Left lung (tissue), 14 donors: ENCODE measurements at regions of chr10 and their contacts with region 1.

Region 1: DNA sequence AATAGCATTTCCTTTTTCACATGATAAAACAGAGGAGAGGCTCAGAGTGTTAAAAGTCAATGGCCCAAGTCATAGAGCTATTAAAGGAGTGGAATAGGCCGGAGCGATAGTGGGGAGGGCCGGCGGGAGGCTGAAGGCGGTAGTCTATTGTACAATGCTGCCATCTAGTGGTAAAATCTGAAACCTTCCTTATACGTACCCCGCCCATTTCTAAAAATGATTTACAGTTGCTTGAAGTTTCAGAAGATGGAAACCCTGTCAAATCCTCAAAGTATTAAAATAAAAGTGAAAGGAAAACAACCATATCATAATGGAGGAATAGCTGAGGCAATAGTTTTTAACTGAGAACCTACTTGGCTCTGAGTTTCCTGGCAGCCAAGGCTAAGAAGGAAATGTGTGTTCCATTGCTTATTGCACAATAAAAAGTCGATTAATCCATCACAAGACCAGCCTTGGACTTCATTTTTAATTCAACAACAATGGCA is 209.1 kb downstream of the CCSER2 start:
- DNase-seq: peak in 2 of 4 donors; percentile 43 to 72
- ATAC-seq: peak; percentile 91
- H3K4me3 ChIP-seq: no peak overlapping the region
- H3K27ac ChIP-seq: no peak overlapping the region
- H3K4me1 ChIP-seq: peaks cover 0 to 15% of the 10 kb centered on the region in 2 donors
- H3K27me3 ChIP-seq: peaks cover 0 to 29% of the 10 kb centered on the region in 2 donors
- CTCF ChIP-seq: peak; percentile 86 to 87

Region 2: GRCh38 chr10:84264611-84265141 is 272.8 kb before region 1 on chr10:
- intact Hi-C with region 1: loop called in 1 of 2 experiments (anchors 5 kb)
- DNase-seq: peak; percentile 54 to 81 (median 62)
- ATAC-seq: peak; percentile 98
- H3K4me3 ChIP-seq: no peak overlapping the region
- H3K27ac ChIP-seq: no peak overlapping the region
- H3K4me1 ChIP-seq: no peaks in the 10 kb centered on the region
- H3K27me3 ChIP-seq: peaks cover 6 to 7% of the 10 kb centered on the region in 2 donors
- CTCF ChIP-seq: peak; percentile 86 to 93

Region 3: GRCh38 chr10:84269773-84270172 is 267.7 kb before region 1 on chr10:
- intact Hi-C with region 1: loop called (anchors 5 to 10 kb)
- DNase-seq: no peak
- ATAC-seq: no peak
- H3K4me3 ChIP-seq: no peak overlapping the region
- H3K27ac ChIP-seq: no peak overlapping the region
- H3K4me1 ChIP-seq: no peaks in the 10 kb centered on the region
- H3K27me3 ChIP-seq: no peaks in the 10 kb centered on the region
- CTCF ChIP-seq: no peak

Region 4: DNA sequence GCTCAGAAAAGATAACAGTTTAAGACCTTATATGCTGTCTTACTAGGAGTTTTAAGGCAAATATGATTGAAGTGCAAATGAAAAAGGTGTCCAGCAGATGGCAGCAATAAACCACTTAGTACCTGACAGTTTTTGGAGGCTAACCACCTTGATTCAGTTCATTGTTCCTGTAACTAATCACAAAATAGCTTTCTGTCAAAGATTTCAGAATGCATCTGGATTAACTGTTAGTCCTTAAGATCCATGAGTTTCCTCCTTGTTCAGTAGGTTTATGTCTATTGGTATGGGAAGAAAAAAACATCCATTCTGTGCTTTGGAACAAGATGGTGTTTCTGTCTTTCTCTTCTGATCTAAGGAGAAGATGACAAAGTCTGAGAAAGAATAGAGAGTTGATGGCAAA is 162.5 kb before region 1 on chr10:
- intact Hi-C with region 1: loop called in 1 of 2 experiments (anchors 5 kb)
- DNase-seq: peak in 2 of 4 donors; percentile 47 to 58
- ATAC-seq: peak; percentile 80
- H3K4me3 ChIP-seq: no peak overlapping the region
- H3K27ac ChIP-seq: no peak overlapping the region
- H3K4me1 ChIP-seq: no peaks in the 10 kb centered on the region
- H3K27me3 ChIP-seq: no peaks in the 10 kb centered on the region
- CTCF ChIP-seq: peak; percentile 50 to 56

Region 5: GRCh38 chr10:85318809-85319807 is 781.6 kb after region 1 on chr10:
- intact Hi-C with region 1: no loop called
- DNase-seq: no peak
- ATAC-seq: no peak
- H3K4me3 ChIP-seq: no peak overlapping the region
- H3K27ac ChIP-seq: no peak overlapping the region
- H3K4me1 ChIP-seq: no peaks in the 10 kb centered on the region
- H3K27me3 ChIP-seq: no peaks in the 10 kb centered on the region
- CTCF ChIP-seq: no peak